ENCODE measurements at regions of chr2 and their contacts with region 1.

Region 1: DNA sequence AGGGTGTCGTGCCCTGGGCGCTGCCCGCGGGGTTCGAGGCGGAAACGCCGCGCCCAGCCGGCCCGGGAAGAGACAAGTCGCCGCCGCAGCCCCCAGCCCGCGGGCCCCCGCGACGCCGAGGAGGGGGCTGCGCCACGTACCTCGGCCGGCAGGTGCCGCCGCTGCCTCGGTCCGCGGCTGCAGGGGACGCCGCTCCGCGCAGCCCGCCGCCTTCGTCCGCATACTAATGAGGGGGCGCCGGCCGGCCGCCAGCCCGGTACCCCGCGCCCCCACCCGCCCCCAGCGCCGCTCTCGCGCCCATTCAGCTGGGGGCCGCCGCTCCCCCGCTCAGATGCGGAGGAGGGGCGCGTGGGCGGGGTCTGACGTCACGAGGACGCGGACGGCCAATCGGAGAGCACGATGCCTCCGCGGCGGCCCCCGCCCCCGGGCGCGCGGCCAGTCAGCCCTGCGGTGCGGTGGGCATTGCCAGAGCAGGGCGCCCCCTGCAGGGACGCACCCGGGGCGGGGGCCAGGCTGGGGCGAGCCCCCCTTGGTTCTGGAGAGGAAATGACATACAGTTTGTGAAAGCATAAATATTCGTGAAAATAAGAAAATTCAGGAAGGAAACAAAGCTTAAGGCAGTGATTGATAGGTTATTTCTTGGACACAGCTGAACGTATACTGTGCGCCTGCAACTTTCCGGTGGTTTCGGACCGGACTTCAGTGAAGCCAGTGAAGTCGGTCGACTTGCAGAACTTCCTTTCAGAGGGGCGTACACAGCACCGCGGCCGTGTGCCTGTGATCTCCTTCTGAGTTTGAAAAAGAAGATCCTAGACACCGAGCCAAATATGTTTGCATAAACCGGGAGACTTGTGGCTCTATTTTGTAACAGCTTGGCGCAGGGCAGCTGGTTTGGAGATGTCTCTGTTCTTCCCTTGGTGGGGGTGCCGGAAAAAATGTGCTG is at the start of gene ST3GAL5:
- DNase-seq: peak; percentile 97
- H3K4me3 ChIP-seq: peak within 1 kb of the TSS; percentile 55 to 80 (median 69)
- H3K27ac ChIP-seq: peak within 1 kb of the TSS; percentile 52
- H3K4me1 ChIP-seq: peaks cover 33% of the 10 kb centered on the region
- H3K27me3 ChIP-seq: no peaks in the 10 kb centered on the region
- CTCF ChIP-seq: peak; percentile 82 to 97
- POLR2A ChIP-seq: peak; percentile 40
- total RNA-seq, gene ST3GAL5: 12.7 and 16.0 TPM in 2 replicates

Region 2: DNA sequence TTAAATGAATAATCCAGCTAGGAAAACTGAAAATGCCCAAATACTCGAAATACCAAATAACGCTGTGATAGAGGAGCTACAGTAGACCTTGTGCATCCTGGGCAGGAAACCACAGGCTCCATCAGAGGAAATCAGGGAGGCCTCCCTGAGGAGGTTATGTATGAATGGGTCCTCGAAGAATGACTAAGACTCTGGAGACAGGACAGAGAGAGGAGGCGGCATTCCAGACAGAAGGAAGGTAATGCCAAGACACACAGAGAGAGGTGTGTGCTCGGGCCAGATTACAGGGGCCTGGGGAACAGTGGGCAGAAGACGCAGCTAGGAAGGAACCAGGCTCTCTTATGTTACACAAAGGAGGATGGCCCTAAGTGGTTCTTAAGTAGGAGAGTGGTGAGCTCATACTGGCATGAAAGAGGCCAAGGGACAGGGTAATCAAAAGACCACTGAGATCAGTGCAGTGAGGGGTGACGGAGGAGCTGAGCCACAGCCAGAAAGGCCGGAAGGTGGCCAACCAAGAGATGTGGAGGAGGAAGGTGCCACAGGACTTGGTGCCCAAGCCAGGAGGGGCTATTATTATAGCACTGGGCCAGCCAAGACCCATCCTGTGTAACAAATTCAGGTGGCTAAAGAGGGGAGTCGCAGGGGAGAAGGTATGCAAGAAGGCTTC is 10.1 kb before region 1 on chr2:
- CTCF ChIA-PET with region 1: interaction called, 13 read pairs
- POLR2A ChIA-PET with region 1: no interaction called
- dilution Hi-C with region 1: no loop called
- intact Hi-C with region 1: no loop called
- DNase-seq: peak; percentile 58
- H3K4me3 ChIP-seq: no peak overlapping the region
- H3K27ac ChIP-seq: peak overlapping the region; percentile 8
- H3K4me1 ChIP-seq: peaks cover 12% of the 10 kb centered on the region
- H3K27me3 ChIP-seq: no peaks in the 10 kb centered on the region
- CTCF ChIP-seq: no peak
- POLR2A ChIP-seq: no peak

Region 3: DNA sequence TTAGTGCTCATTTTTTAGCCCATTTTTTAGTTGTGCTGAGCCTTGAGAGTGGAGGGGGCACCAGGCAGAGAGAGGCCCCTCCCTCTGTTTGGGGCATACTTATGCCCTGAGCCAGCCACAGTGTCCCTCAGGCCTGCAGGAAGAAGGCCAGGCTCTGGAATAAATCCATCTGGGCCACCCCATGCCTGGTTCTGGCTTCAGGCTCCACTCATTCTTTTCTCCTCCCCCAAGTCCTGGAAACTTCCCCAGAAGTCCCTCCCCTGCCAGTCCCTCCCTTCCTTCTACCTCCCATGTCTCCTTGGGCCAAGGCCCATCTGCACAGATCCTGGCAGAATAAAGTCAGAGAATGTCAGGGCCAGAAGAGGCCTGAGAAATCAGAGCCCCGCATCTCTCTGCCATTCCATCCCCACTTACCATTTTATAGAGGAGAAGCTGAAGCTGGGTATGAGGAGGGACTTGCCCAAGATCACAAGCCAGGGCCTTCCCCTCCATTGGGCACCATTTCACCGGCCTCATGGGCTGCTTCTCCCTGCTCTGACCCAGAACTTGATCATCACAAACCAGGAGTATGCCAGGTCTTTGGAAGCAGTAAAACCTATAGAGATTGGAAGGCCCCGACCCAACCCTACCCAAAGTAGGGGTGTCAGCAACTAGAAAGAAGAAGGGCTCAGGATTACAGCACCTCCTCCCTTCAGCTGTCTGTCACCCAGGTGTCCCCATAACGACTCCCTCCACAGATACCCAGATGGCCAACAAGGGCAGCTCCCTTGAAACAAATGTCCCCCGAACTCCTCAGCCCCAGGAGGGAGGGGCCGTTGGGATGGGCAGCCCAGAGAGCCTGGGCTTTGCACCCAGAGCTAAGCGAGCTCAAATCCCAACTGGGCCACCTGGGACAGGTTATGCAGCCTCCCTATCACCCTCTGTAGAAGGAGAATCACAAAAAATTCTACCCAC is 108.3 kb after region 1 on chr2:
- CTCF ChIA-PET with region 1: no interaction called
- POLR2A ChIA-PET with region 1: no interaction called
- dilution Hi-C with region 1: no loop called
- intact Hi-C with region 1: no loop called
- DNase-seq: no peak
- H3K4me3 ChIP-seq: no peak overlapping the region
- H3K27ac ChIP-seq: no peak overlapping the region
- H3K4me1 ChIP-seq: peaks cover 14% of the 10 kb centered on the region
- H3K27me3 ChIP-seq: no peaks in the 10 kb centered on the region
- CTCF ChIP-seq: no peak
- POLR2A ChIP-seq: no peak

Region 4: DNA sequence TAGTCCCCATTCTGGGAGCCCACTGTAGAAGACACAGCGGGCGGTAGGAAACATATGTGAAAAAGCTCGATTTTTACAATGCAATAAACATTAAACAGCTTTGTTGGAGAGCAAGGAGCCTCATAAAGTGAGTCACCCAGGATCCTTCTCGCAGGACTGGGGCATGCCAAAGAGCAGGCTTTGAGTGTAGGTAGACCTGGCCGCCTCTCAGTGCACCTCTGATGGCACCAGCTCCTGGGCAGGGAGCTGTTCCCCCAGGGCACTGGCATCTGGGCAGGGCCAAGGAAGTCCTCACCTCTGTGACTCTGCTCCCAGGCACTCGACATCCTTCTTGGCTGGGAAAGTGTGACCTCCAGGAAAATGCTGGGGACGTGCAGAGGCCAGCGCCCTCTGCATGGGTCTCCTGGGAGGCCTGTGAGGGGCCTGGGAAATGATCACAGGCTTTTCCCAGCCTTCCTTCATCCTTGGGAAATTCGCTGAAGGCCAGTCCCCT is 122.5 kb after region 1 on chr2:
- CTCF ChIA-PET with region 1: interaction called, 11 read pairs
- POLR2A ChIA-PET with region 1: no interaction called
- dilution Hi-C with region 1: no loop called
- intact Hi-C with region 1: no loop called
- DNase-seq: no peak
- H3K4me3 ChIP-seq: no peak overlapping the region
- H3K27ac ChIP-seq: no peak overlapping the region
- H3K4me1 ChIP-seq: no peaks in the 10 kb centered on the region
- H3K27me3 ChIP-seq: peaks cover 4 to 5% of the 10 kb centered on the region in 2 experiments
- CTCF ChIP-seq: no peak
- POLR2A ChIP-seq: no peak

Region 5: GRCh38 chr2:86028766-86029381 is 139.9 kb after region 1 on chr2:
- CTCF ChIA-PET with region 1: interaction called, 42 read pairs
- POLR2A ChIA-PET with region 1: no interaction called
- dilution Hi-C with region 1: no loop called
- intact Hi-C with region 1: loop called (anchors 2 kb)
- DNase-seq: peak; percentile 89
- H3K4me3 ChIP-seq: no peak overlapping the region
- H3K27ac ChIP-seq: no peak overlapping the region
- H3K4me1 ChIP-seq: peaks cover 17% of the 10 kb centered on the region
- H3K27me3 ChIP-seq: no peaks in the 10 kb centered on the region
- CTCF ChIP-seq: no peak
- POLR2A ChIP-seq: no peak

Region 6: GRCh38 chr2:86072271-86072858 is 183.4 kb after region 1 on chr2:
- CTCF ChIA-PET with region 1: interaction called, 78 read pairs
- POLR2A ChIA-PET with region 1: no interaction called
- dilution Hi-C with region 1: no loop called
- intact Hi-C with region 1: loop called (anchors 2 kb)
- DNase-seq: peak; percentile 84
- H3K4me3 ChIP-seq: no peak overlapping the region
- H3K27ac ChIP-seq: peak overlapping the region; percentile 27
- H3K4me1 ChIP-seq: peaks cover 16% of the 10 kb centered on the region
- H3K27me3 ChIP-seq: no peaks in the 10 kb centered on the region
- CTCF ChIP-seq: no peak
- POLR2A ChIP-seq: no peak